Activated B cell treated with CpG ODN at 0.5 μM for 24 hours (primary cell): ENCODE measurements at regions of chr16 and their contacts with region 1.

Region 1: GRCh38 chr16:17467923-17468540 is 2.7 kb downstream of the XYLT1 start:
- DNase-seq: no peak
- ATAC-seq: no peak
- H3K4me3 Mint-ChIP-seq: peak overlapping the region; percentile 83
- H3K27ac Mint-ChIP-seq: no peak overlapping the region
- H3K4me1 Mint-ChIP-seq: peaks cover 54% of the 10 kb centered on the region
- H3K27me3 Mint-ChIP-seq: no peaks in the 10 kb centered on the region
- CTCF ChIP-seq: no peak

Region 2: DNA sequence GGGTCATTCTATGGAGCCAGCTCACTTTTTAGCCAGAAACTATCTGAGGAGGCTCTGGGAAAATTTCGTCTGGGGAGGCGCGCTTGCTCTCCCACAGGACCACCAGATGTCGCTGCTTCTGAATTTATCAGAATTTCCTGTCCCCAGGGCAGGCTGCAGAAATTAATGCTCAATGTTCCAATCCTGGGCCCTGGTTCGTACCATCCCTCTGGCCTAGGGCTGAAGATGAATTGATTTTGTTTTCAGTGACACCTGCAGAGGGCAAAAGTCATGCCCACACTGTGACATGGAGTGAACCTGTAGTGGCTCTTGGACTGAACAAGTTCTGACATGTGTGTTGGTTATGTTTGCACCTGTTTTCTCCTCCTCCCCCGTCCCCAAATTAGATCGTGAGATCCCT is 606.5 kb before region 1 on chr16:
- CTCF ChIA-PET with region 1: no interaction called
- POLR2A ChIA-PET with region 1: interaction called, 4 read pairs
- intact Hi-C with region 1: loop called (anchors 2 kb)
- DNase-seq: peak; percentile 18
- ATAC-seq: no peak
- H3K4me3 Mint-ChIP-seq: no peak overlapping the region
- H3K27ac Mint-ChIP-seq: no peak overlapping the region
- H3K4me1 Mint-ChIP-seq: peaks cover 2% of the 10 kb centered on the region
- H3K27me3 Mint-ChIP-seq: peaks cover 8% of the 10 kb centered on the region
- CTCF ChIP-seq: no peak

Region 3: DNA sequence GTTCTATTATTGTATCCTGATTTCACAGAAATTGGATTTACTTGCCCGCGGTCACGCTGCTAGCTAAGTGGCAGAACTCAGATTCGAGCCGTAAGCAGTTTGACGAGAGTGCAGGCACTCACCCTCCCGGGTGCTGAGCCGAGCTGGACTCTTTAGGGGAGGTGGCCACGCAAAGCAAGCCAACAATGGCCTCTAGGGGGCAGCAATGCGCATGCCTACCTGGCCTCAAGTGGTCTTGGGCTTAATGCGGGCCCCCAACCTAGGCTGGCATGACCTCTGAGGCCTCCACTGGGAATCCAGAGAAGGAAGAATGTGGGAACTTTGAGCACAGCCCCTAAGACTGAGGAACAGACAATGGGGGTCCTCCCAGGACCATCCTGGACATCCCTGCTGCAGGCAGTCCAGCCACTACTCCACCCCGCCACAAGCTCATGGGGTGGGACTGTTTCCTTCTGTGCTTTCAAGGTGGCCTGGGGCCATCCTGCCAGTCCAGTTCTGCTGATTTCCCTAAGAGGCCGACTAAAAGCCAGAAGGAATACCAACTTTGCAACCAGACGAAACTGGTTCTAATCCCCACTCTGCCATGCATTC is 273.7 kb before region 1 on chr16:
- CTCF ChIA-PET with region 1: interaction called, 10 read pairs
- POLR2A ChIA-PET with region 1: no interaction called
- intact Hi-C with region 1: loop called (anchors 1 kb)
- DNase-seq: peak; percentile 52
- ATAC-seq: peak; percentile 56
- H3K4me3 Mint-ChIP-seq: no peak overlapping the region
- H3K27ac Mint-ChIP-seq: no peak overlapping the region
- H3K4me1 Mint-ChIP-seq: no peaks in the 10 kb centered on the region
- H3K27me3 Mint-ChIP-seq: no peaks in the 10 kb centered on the region
- CTCF ChIP-seq: no peak

Region 4: DNA sequence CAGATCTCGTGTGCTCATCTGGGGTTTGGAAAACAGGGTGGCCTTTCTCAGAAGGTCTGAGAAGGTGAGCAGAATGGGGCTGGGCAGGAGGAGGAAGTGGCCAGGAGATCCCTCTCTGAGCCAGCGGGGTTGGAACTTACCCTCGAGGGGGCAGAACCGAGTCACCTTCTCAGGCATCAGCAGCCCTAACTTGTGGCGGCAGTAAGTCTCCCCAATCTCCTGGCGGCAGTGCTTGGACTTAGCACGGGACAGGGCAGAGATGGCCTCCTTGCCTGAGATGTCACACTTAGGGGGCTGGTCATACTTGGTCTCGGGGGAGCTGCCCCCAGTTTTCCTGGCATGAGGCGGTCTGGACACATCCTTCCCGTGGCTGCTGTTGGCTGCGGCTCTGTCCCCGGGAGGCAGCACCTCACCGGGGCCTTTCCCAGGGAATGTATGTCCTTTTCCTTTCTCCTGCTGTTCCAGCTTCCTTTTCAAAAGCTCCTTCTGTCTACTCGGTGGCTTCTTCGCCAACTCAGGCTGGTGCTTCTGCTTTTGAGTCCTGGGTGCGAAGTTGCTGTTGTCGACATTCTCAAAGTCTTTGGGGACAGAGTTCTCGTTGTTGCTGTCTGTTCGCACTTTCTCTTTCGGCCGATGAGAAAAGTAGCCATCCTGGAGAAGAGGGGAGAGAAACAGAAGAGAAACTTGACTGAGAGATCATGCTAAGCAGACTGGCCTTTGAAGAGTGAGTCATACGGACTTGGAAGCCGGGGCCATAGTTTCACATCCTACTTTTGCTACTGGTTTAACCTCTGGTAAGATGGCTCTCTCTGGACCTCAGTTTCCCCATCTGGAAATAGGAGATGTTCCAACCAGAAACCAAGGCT is 209.0 kb before region 1 on chr16:
- CTCF ChIA-PET with region 1: interaction called, 7 read pairs
- POLR2A ChIA-PET with region 1: interaction called, 4 read pairs
- intact Hi-C with region 1: loop called (anchors 5 kb)
- DNase-seq: no peak
- ATAC-seq: peak; percentile 83
- H3K4me3 Mint-ChIP-seq: peak overlapping the region; percentile 79
- H3K27ac Mint-ChIP-seq: peak overlapping the region; percentile 91
- H3K4me1 Mint-ChIP-seq: peaks cover 38% of the 10 kb centered on the region
- H3K27me3 Mint-ChIP-seq: no peaks in the 10 kb centered on the region
- CTCF ChIP-seq: no peak

Region 5: GRCh38 chr16:17343028-17343427 is 125.0 kb before region 1 on chr16:
- CTCF ChIA-PET with region 1: interaction called, 5 read pairs
- POLR2A ChIA-PET with region 1: interaction called, 10 read pairs
- intact Hi-C with region 1: no loop called
- DNase-seq: no peak
- ATAC-seq: peak; percentile 48
- H3K4me3 Mint-ChIP-seq: peak overlapping the region; percentile 57
- H3K27ac Mint-ChIP-seq: peak overlapping the region; percentile 62
- H3K4me1 Mint-ChIP-seq: peaks cover 72% of the 10 kb centered on the region
- H3K27me3 Mint-ChIP-seq: no peaks in the 10 kb centered on the region
- CTCF ChIP-seq: no peak